Lower leg skin (tissue), 4 donors: ENCODE measurements at regions of chr14 and their contacts with region 1.

Region 1: DNA sequence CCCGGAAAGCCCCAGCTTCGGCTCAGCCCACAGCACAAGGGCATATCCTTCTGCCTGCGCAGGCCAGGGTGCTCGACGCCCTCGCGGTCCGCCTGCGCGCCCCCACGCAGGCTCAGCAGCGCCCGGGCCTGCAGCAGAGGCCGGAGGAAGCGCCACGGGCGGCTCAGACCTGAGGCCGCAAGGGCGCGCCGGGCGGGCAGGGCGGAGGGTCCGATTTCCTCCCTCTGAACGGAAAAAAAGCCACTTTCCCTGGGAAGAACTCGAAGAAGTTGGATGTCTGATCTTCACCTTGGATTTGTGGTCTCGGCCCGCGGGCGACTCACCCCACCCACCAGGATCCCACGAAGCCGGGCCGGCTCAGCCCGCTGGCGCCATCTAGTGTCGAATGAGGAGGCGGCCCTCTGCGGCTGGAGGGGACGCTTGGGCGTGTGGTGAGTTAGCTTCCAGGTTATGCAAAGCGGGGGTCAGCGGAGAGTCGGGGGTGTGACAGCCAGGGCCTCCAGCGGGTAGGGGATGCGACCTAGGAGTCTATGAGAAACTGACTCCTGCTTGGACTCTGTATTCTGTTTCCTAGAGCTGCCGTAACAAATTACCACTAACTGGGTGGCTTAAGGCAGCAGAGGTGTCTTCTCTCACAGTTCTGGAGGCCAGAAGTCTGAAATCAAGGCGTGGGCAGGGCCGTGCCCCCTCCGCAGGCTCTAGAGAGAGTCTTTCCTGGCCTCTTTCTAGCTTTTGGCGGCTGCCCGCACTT is 40.0 kb upstream of the SRSF5 start:
- DNase-seq: peak; percentile 68 to 97
- H3K4me3 ChIP-seq: no peak overlapping the region
- CTCF ChIP-seq: peak in 1 of 3 donors; percentile 82
- POLR2A ChIP-seq: no peak

Region 2: GRCh38 chr14:69586404-69586803 is 140.5 kb before region 1 on chr14:
- intact Hi-C with region 1: loop called (anchors 5 kb)
- DNase-seq: no peak
- H3K4me3 ChIP-seq: no peak overlapping the region
- CTCF ChIP-seq: no peak
- POLR2A ChIP-seq: no peak

Region 3: GRCh38 chr14:69600304-69600891 is 126.5 kb before region 1 on chr14:
- intact Hi-C with region 1: loop called (anchors 5 kb)
- DNase-seq: no peak
- H3K4me3 ChIP-seq: no peak overlapping the region
- CTCF ChIP-seq: no peak
- POLR2A ChIP-seq: no peak

Region 4: GRCh38 chr14:69928111-69928523 is 201.2 kb after region 1 on chr14:
- intact Hi-C with region 1: no loop called
- DNase-seq: no peak
- H3K4me3 ChIP-seq: no peak overlapping the region
- CTCF ChIP-seq: no peak
- POLR2A ChIP-seq: no peak

Region 5: GRCh38 chr14:69980457-69981425 is 253.8 kb after region 1 on chr14:
- intact Hi-C with region 1: no loop called
- DNase-seq: no peak
- H3K4me3 ChIP-seq: no peak overlapping the region
- CTCF ChIP-seq: no peak
- POLR2A ChIP-seq: no peak

Region 6: GRCh38 chr14:70018713-70019211 is 291.8 kb after region 1 on chr14:
- intact Hi-C with region 1: no loop called
- DNase-seq: peak in 1 of 2 donors; percentile 85
- H3K4me3 ChIP-seq: no peak overlapping the region
- CTCF ChIP-seq: no peak
- POLR2A ChIP-seq: no peak